Activated naive CD8-positive, alpha-beta T cell treated with anti-CD3 and anti-CD28 coated beads, Interleukin-2, amount 10 ng/mL, durations not matched to agents 7 days and 5 days (primary cell): ENCODE measurements at regions of chr10 and their contacts with region 1.

Region 1: DNA sequence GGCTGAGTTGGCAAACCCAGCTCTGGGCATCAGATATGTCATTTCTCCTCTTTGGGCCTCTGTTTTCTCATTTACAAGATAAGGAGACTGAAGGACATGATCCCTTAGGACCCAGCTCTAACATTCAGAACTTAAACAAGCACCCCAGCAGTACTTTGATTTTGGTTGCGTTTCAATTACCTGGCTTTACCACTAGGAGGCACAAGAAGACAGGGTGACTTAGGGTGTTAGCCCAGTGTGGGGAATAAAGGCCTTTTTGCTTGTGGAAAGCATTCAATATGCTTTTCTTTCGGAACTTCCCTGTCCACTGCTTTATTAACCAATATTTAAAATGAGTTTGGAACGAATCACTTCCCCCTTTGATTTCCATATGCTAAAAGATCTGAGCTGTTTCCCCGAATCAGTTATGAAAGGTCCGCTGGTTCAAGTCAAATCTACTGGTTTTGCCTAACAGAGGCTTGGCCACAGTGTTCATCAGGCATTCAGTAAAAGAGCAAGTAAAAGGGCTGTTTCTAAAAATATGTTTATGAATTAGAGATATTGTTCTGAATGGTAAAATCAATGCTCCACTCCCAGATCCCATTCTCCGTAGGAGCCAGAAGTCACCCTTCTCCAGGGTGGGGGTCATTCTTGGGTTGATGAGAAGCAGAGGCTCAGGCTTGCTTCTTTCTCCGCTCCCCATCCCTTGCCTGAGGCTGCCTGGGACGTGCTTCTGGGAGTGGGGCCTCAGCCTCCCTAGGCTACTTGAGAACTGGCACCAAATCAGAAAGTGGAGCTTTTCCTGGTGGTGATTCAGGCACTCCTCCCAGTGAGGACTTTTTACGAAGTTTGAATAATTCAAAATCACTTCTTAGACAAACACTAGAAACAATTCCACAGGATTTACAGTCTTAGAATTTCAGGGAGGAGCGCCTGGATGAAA is 105.5 kb downstream of the MYOF start:
- DNase-seq: no peak
- ATAC-seq: peak; percentile 70
- H3K4me3 Mint-ChIP-seq: no peak overlapping the region
- H3K27ac Mint-ChIP-seq: no peak overlapping the region
- H3K4me1 Mint-ChIP-seq: peaks cover 12% of the 10 kb centered on the region
- H3K27me3 Mint-ChIP-seq: no peaks in the 10 kb centered on the region

Region 2: DNA sequence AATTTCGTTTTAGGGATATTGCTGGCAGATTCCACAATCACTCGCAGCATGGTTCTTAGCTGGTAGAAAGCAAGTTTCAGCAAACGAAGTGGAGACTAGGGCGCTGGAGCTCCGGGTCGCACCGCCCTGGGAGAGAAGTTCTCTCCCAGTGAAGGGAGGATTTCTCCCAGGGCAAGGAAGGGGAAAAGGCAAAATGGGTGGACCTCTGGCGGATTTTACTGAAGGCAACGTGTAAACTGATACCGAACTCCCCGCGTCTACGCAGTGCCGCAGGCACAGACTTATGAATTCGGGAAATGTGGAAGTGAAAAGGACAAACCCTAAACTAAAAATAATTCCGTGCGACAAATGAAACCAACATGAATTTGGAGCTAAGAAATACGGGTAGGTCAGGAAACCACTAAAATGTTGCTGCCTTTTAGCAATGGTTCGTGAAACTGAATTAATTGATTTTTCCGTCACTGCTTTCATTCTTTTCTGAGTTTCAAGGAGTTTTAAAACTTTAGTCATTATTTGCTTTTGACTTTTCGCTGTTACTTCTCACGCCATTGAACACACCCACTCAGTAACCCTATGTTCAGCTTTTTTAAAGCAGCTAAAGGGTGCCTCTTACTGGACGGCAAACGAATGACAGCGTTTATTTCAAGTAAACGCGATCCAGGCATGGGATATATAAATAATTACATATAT is 105.7 kb after region 1 on chr10 and contains the start of gene MYOF:
- POLR2A ChIA-PET with region 1: interaction called, 15 read pairs
- DNase-seq: no peak
- ATAC-seq: peak; percentile 82
- H3K4me3 Mint-ChIP-seq: peak within 1 kb of the TSS; percentile 92
- H3K27ac Mint-ChIP-seq: peak within 1 kb of the TSS; percentile 43
- H3K4me1 Mint-ChIP-seq: peaks cover 12% of the 10 kb centered on the region
- H3K27me3 Mint-ChIP-seq: peaks cover 20% of the 10 kb centered on the region
- total RNA-seq, gene MYOF: 0.91 to 1.9 TPM